ENCODE measurements at regions of chr1 and their contacts with region 1.

Region 1: GRCh38 chr1:186680245-186681061 is at the start of gene PTGS2:
- DNase-seq: peak; percentile 96
- H3K4me3 ChIP-seq: peak within 1 kb of the TSS; percentile 80 to 99 (median 87)
- H3K27ac ChIP-seq: peak within 1 kb of the TSS; percentile 91
- H3K4me1 ChIP-seq: peaks cover 26% of the 10 kb centered on the region
- H3K27me3 ChIP-seq: no peaks in the 10 kb centered on the region
- CTCF ChIP-seq: peak; percentile 51 to 77
- POLR2A ChIP-seq: peak; percentile 77
- total RNA-seq, gene PTGS2: 21.6 and 24.1 TPM in 2 replicates

Region 2: DNA sequence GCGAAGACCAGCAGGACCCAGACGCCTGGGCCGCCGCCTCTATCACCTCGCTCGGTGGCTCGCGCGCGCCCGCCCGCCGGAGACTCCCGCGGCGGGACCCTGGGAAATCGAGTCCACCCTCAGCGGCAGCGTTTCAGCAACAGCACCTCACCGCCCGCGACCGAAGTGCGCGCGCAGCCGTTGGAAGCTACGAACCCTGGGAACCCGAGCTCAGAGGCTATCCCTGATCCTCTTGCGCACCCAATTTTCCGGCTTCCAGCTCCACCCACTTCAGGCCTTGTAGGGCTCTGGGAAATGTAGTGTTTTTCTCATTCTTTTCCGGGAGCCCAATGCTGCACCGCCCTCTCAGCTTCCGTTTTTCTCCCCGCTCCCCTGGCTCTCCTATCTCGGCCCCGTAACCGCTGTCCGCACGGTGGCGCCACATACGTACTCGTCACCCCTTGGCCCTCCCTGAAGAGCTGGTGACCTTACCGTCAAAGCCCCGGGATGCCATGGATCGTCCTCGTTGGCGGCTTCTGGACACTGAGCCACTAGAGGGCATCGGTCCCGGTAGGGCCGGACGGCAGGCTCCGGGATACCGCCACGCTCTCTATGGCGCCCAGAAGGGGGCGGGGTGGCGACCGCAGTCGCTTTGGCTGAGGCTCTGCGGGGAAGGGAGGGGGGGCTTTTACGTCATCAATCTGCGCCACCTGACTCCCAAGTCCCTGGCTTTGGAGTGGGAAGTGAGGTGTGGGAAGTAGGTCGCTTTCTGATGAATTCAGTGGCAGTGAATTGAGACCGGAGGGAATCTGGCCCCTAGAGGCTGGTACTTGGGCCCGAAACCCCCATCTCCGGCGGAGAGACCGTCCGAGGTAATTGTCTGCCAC is 305.1 kb before region 1 on chr1 and contains the starts of genes ODR4 and TPR:
- CTCF ChIA-PET with region 1: interaction called, 52 read pairs
- POLR2A ChIA-PET with region 1: no interaction called
- dilution Hi-C with region 1: no loop called
- intact Hi-C with region 1: loop called (anchors 1 kb)
- DNase-seq: peak; percentile 99
- H3K4me3 ChIP-seq: peak within 1 kb of the TSS; percentile 65 to 91 (median 68)
- H3K27ac ChIP-seq: peak within 1 kb of the TSS; percentile 63
- H3K4me1 ChIP-seq: peaks cover 18% of the 10 kb centered on the region
- H3K27me3 ChIP-seq: no peaks in the 10 kb centered on the region
- CTCF ChIP-seq: peak; percentile 90 to 98
- POLR2A ChIP-seq: peak; percentile 83
- total RNA-seq, gene ODR4: 17.3 and 18.6 TPM in 2 replicates
- total RNA-seq, gene TPR: 107 and 118 TPM in 2 replicates

Region 3: DNA sequence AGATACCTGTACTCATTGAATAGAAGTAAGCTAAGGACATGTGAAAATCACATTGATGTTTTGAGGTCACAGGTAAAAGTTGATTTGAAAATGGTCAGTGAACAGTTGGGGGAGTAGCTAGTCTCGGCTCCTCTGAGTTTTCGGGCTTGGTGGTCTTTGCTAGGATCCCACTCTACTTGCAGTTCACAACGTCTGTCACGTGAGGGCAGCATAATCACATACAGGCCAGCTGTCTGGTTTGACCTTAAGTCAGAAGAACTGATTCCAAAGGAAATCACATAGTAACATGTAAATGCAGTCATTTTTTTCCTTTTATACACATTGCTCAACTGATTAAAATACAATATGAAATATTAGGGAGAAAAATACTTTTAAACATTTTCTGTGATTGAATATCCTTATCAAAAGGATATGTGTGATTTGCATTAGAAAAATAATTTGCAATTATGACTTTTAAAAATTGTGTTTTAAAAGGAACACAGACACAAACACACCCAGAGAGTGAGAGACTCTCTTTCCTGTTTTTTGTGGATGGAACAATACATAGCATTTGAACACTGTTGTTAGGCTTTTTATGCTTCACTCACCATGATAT is 197.7 kb before region 1 on chr1:
- CTCF ChIA-PET with region 1: interaction called, 17 read pairs
- POLR2A ChIA-PET with region 1: no interaction called
- dilution Hi-C with region 1: no loop called
- intact Hi-C with region 1: loop called (anchors 1 kb)
- DNase-seq: peak; percentile 90
- H3K4me3 ChIP-seq: no peak overlapping the region
- H3K27ac ChIP-seq: peak overlapping the region; percentile 19
- H3K4me1 ChIP-seq: peaks cover 16% of the 10 kb centered on the region
- H3K27me3 ChIP-seq: no peaks in the 10 kb centered on the region
- CTCF ChIP-seq: peak; percentile 81 to 87
- POLR2A ChIP-seq: no peak

Region 4: DNA sequence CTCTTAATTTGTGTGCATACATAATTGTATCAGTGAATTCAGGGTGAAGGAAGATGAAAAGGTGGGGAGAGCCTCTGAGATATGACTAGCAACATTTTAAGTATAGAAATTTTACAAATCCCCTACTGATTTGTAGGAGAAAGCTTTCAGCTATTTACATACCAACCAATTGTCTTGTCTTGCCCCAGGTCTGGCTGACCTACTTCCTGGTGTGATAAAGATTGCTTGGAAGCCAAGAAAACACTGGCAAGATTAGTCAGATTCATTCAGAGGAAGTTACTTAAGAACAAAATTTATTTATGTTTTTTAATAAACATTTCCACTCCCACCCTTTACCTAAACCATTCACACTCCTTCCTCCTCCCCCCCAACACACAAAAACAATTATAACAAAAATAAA is 17.7 kb before region 1 on chr1:
- CTCF ChIA-PET with region 1: interaction called, 13 read pairs
- POLR2A ChIA-PET with region 1: no interaction called
- dilution Hi-C with region 1: no loop called
- intact Hi-C with region 1: loop called (anchors 2 kb)
- DNase-seq: peak; percentile 68
- H3K4me3 ChIP-seq: no peak overlapping the region
- H3K27ac ChIP-seq: peak overlapping the region; percentile 57
- H3K4me1 ChIP-seq: peaks cover 15% of the 10 kb centered on the region
- H3K27me3 ChIP-seq: no peaks in the 10 kb centered on the region
- CTCF ChIP-seq: no peak
- POLR2A ChIP-seq: no peak

Region 5: GRCh38 chr1:186806477-186806876 is 126.0 kb after region 1 on chr1:
- CTCF ChIA-PET with region 1: interaction called, 9 read pairs
- POLR2A ChIA-PET with region 1: no interaction called
- dilution Hi-C with region 1: no loop called
- intact Hi-C with region 1: loop called (anchors 1 kb)
- DNase-seq: peak; percentile 73
- H3K4me3 ChIP-seq: no peak overlapping the region
- H3K27ac ChIP-seq: no peak overlapping the region
- H3K4me1 ChIP-seq: no peaks in the 10 kb centered on the region
- H3K27me3 ChIP-seq: no peaks in the 10 kb centered on the region
- CTCF ChIP-seq: peak; percentile 32 to 49
- POLR2A ChIP-seq: no peak

Region 6: GRCh38 chr1:186915555-186915954 is 235.1 kb after region 1 on chr1:
- CTCF ChIA-PET with region 1: interaction called, 11 read pairs
- POLR2A ChIA-PET with region 1: no interaction called
- dilution Hi-C with region 1: no loop called
- intact Hi-C with region 1: loop called (anchors 5 kb)
- DNase-seq: peak; percentile 20
- H3K4me3 ChIP-seq: no peak overlapping the region
- H3K27ac ChIP-seq: no peak overlapping the region
- H3K4me1 ChIP-seq: peaks cover 20% of the 10 kb centered on the region
- H3K27me3 ChIP-seq: no peaks in the 10 kb centered on the region
- CTCF ChIP-seq: no peak
- POLR2A ChIP-seq: no peak

Region 7: DNA sequence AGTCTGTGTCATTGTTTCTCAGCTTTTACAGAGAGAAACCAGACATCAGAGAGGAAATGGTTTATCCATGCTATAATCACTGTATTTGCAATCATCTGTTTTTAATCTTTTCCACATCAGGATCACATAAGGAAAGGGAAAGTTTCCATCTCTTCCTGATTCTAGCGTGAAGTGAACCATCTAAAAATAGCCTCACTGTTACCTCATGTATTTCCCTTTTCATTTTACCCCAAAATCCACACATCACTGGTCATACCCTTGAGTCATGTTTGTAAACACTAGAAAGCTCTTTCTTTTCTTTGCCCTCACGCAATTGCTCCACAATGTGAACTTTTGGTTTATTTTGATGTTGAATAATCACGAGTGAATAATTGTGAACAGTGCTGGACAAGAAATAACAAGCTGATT is 294.3 kb after region 1 on chr1:
- CTCF ChIA-PET with region 1: interaction called, 7 read pairs
- POLR2A ChIA-PET with region 1: interaction called, 5 read pairs
- dilution Hi-C with region 1: no loop called
- intact Hi-C with region 1: loop called (anchors 1 kb)
- DNase-seq: peak; percentile 98
- H3K4me3 ChIP-seq: peak overlapping the region in 1 of 3 experiments; percentile 12
- H3K27ac ChIP-seq: peak overlapping the region; percentile 93
- H3K4me1 ChIP-seq: peaks cover 49% of the 10 kb centered on the region
- H3K27me3 ChIP-seq: no peaks in the 10 kb centered on the region
- CTCF ChIP-seq: no peak
- POLR2A ChIP-seq: peak; percentile 28